HEK293T (cell line): ENCODE measurements at regions of chr20 and their contacts with region 1.

Region 1: GRCh38 chr20:59850018-59850641 is 83.3 kb downstream of the SYCP2 start:
- DNase-seq: peak; percentile 42

Region 2: GRCh38 chr20:59782986-59783640 is 67.0 kb before region 1 on chr20:
- CTCF ChIA-PET with region 1: interaction called, 18 read pairs
- POLR2A ChIA-PET with region 1: no interaction called
- DNase-seq: peak; percentile 84

Region 3: GRCh38 chr20:59835448-59836395 is 14.4 kb before region 1 on chr20:
- CTCF ChIA-PET with region 1: interaction called, 13 read pairs
- POLR2A ChIA-PET with region 1: interaction called, 5 read pairs
- DNase-seq: peak; percentile 78

Region 4: DNA sequence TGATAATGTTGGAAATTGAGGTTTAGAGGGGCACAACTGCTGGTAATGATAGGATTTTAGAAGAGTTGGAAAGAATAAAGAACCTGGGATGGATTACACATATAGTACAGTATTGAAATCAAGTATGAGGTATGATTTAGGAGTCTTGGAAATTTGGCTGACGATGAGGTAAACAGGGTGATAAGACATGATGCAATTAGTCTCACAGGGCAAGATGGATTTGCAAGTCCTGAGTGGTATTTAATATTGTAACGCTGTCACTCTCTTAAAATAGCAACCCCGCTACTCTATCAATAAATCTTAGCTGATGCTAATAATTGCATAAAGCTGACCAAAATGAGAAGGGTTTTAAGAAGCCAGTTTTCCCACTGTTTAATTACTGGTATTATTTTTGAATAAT is 12.9 kb after region 1 on chr20:
- CTCF ChIA-PET with region 1: interaction called, 10 read pairs
- POLR2A ChIA-PET with region 1: no interaction called
- DNase-seq: no peak

Region 5: GRCh38 chr20:59933849-59934596 is 83.9 kb after region 1 on chr20:
- CTCF ChIA-PET with region 1: no interaction called
- POLR2A ChIA-PET with region 1: no interaction called
- DNase-seq: peak; percentile 81